B cell (primary cell): ENCODE measurements at regions of chr17 and their contacts with region 1.

Region 1: DNA sequence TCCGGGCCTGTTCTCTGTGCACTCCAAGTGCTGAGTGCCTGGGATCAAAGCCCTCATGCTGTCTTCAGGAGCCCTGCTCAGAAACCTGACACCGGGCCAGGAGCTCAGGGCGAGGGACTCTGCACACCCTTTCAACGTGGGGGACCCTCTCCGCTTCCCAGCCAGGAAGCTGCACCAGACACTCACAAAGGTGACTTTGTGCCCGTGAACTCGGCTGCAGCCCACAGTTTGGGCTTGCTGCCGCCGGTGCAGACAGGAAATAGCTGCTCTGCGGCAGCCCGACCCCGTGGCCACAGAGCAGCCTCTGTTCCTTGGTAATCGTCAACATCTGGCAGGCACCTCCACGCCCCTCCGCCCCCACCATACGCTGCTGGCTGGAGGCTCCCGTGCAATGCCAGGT is 93.4 kb upstream of the METRNL start:
- DNase-seq: peak; percentile 49
- ATAC-seq: peak; percentile 51
- H3K4me3 ChIP-seq: peak overlapping the region in 3 of 5 experiments; percentile 5 to 26 (median 8)
- H3K4me3 Mint-ChIP-seq: peak overlapping the region; percentile 81
- H3K27ac ChIP-seq: no peak overlapping the region
- H3K27ac Mint-ChIP-seq: peak overlapping the region; percentile 46
- H3K4me1 ChIP-seq: peaks cover 12 to 18% of the 10 kb centered on the region in 2 donors
- H3K4me1 Mint-ChIP-seq: peaks cover 18% of the 10 kb centered on the region
- H3K27me3 ChIP-seq: peaks cover 0 to 5% (median 0%) of the 10 kb centered on the region in 4 experiments
- H3K27me3 Mint-ChIP-seq: no peaks in the 10 kb centered on the region
- CTCF ChIP-seq: no peak

Region 2: GRCh38 chr17:83012868-83013778 is 27.1 kb after region 1 on chr17:
- CTCF ChIA-PET with region 1: no interaction called
- POLR2A ChIA-PET with region 1: no interaction called
- intact Hi-C with region 1: no loop called
- DNase-seq: no peak
- ATAC-seq: no peak
- H3K4me3 ChIP-seq: no peak overlapping the region
- H3K4me3 Mint-ChIP-seq: no peak overlapping the region
- H3K27ac ChIP-seq: no peak overlapping the region
- H3K27ac Mint-ChIP-seq: no peak overlapping the region
- H3K4me1 ChIP-seq: no peaks in the 10 kb centered on the region
- H3K4me1 Mint-ChIP-seq: no peaks in the 10 kb centered on the region
- H3K27me3 ChIP-seq: no peaks in the 10 kb centered on the region
- H3K27me3 Mint-ChIP-seq: no peaks in the 10 kb centered on the region
- CTCF ChIP-seq: no peak

Region 3: GRCh38 chr17:83041305-83041704 is 55.3 kb after region 1 on chr17:
- CTCF ChIA-PET with region 1: no interaction called
- POLR2A ChIA-PET with region 1: no interaction called
- intact Hi-C with region 1: loop called (anchors 10 kb)
- DNase-seq: no peak
- ATAC-seq: no peak
- H3K4me3 ChIP-seq: no peak overlapping the region
- H3K4me3 Mint-ChIP-seq: no peak overlapping the region
- H3K27ac ChIP-seq: no peak overlapping the region
- H3K27ac Mint-ChIP-seq: no peak overlapping the region
- H3K4me1 ChIP-seq: no peaks in the 10 kb centered on the region
- H3K4me1 Mint-ChIP-seq: no peaks in the 10 kb centered on the region
- H3K27me3 ChIP-seq: no peaks in the 10 kb centered on the region
- H3K27me3 Mint-ChIP-seq: no peaks in the 10 kb centered on the region
- CTCF ChIP-seq: no peak